ENCODE measurements at regions of chr10 and their contacts with region 1.

Region 1: DNA sequence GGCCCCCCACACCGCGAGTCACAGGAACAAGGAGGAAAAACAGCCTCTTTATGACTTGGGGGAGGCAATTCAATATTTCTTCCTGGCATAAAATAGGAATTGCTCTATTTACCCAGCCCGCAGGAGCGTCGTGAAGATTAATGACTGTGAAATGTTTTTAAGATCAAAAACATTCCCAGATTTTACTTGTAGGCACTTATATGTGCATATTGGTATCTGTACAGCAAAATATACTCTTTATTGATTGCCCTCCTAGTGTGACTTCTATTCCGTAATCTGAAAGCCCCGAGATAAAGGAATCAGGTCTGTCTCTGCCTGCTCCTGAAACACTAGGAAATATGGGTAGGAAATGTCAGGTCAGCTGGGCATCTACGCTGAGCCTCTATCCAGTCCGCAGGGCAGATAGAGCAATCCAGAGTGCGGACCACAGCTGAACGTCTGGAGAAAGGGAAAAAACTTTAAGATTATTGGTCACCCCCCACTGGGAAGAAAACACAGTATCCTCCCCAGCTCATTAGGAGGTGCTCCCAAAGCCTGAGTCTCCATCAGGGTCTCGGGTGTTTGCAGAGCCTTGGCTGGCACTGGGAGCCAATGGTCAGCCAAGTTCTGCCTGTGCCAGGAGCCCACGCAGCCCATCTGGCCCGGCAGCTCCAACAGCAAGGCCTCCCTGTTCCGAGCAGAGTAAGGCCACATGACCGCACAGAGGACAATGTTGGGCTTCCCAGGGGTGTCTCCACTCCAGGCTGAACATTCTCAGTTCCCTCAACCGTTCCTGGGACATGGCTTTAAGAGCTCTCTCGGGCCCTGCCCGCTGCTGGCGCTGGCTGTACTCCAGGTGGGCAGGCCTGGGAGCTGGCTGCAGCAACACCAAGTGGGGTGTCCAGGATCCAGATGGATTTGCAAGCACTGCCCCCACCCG is 7.7 kb downstream of the CTBP2 start:
- DNase-seq: peak; percentile 52 to 90 (median 78)

Region 2: GRCh38 chr10:124999433-125000365 is 153.0 kb before region 1 on chr10:
- intact Hi-C with region 1: loop called (anchors 5 kb)
- DNase-seq: peak in 31 of 42 donors; percentile 3 to 67 (median 35)